ENCODE measurements at regions of chr11 and their contacts with region 1.

Region 1: DNA sequence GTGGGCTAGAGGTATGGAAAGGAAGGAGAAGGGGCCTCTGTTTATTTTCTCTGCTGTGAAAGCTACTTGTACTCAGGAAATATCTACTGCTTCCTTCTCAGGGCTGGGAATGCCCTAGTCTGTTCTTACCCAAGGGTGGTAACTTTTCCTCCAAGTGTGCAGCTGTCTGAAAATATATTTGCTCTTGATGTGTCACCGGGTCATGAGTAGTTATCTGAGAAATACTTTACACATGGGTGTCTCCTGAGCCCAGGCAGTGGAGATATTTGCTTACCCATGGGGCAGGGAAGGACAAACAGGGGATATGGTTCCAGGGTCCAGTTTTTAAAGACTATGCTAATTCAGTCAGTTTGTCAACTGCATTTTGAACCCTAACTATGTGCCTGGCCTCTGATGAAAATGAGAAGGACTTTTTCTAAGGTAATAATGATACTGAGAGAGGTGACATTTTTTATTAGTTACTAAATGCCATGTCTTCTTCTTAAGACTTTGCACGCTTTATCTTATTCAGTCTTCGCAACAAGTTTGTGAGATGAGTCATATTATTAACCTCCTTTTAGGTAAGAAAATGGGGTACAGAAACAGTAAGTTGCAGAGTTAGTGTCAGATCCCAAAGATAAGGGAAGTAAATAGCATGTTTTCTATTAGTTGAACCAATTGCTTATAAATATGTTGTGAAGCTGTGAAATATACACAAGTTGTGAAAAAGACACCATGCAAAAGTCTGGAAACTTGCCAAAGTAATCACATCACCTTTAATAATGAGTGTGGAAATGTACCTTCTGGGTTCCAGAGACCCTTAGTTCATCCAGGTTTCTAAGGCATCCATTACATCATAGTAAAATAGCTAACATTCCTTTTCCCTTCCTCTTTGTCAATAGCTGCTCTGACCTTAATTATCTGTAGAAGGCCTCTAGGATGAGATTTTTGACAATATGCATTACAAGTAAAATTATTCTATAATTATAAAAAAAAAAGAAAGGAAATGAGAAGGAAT is 22.8 kb downstream of the SYTL2 start:
- DNase-seq: no peak
- ATAC-seq: no peak
- H3K4me3 ChIP-seq: no peak overlapping the region
- H3K4me3 Mint-ChIP-seq: no peak overlapping the region
- H3K27ac ChIP-seq: no peak overlapping the region
- H3K27ac Mint-ChIP-seq: no peak overlapping the region
- H3K4me1 ChIP-seq: no peaks in the 10 kb centered on the region
- H3K4me1 Mint-ChIP-seq: peaks cover 40% of the 10 kb centered on the region
- H3K27me3 ChIP-seq: no peaks in the 10 kb centered on the region
- H3K27me3 Mint-ChIP-seq: no peaks in the 10 kb centered on the region
- CTCF ChIP-seq: no peak

Region 2: DNA sequence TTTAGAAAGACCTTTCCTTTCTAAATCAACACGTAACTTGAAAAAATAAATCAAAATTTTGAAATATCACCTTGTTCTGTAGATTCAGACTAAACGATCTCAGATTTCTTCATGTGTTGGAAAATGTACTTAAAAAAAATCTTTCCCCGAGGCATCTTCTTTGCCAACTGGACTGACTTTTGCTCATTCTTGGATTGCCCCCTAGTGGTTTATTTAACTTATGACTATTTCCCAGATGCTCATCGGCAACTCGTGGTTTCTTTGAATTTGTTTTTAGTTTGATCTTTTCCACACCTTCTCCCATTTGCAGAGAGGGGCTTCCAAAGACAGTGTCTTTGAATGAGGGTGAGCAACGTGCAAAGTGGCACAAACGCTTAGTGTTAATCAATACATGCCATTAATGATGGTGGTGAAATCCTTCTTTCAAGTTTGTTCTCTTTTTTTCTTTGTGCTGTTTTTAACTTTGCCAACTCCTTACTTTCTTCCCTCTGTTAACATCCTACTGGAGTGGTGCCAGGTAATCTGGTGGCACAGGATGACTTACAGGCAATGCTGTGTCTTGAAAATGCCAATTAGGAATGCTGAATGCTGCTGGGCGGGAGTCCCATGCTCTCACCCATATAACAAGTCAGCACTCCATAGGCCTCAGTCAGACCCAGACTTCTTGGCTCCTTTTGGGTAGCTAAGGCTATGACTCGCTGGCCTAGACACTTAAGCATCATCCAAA is 1030.5 kb after region 1 on chr11:
- CTCF ChIA-PET with region 1: no interaction called
- POLR2A ChIA-PET with region 1: no interaction called
- intact Hi-C with region 1: loop called in 1 of 2 experiments (anchors 10 kb)
- DNase-seq: peak in 3 of 14 experiments; percentile 58 to 64 (median 63)
- ATAC-seq: no peak
- H3K4me3 ChIP-seq: no peak overlapping the region
- H3K4me3 Mint-ChIP-seq: no peak overlapping the region
- H3K27ac ChIP-seq: no peak overlapping the region
- H3K27ac Mint-ChIP-seq: no peak overlapping the region
- H3K4me1 ChIP-seq: no peaks in the 10 kb centered on the region
- H3K4me1 Mint-ChIP-seq: peaks cover 5% of the 10 kb centered on the region
- H3K27me3 ChIP-seq: peaks cover 0 to 5% of the 10 kb centered on the region in 2 experiments
- H3K27me3 Mint-ChIP-seq: peaks cover 7% of the 10 kb centered on the region
- CTCF ChIP-seq: peak; percentile 79

Measured in CD4-positive, alpha-beta T cell (primary cell).